ENCODE measurements at regions of chr20 and their contacts with region 1.

Region 1: DNA sequence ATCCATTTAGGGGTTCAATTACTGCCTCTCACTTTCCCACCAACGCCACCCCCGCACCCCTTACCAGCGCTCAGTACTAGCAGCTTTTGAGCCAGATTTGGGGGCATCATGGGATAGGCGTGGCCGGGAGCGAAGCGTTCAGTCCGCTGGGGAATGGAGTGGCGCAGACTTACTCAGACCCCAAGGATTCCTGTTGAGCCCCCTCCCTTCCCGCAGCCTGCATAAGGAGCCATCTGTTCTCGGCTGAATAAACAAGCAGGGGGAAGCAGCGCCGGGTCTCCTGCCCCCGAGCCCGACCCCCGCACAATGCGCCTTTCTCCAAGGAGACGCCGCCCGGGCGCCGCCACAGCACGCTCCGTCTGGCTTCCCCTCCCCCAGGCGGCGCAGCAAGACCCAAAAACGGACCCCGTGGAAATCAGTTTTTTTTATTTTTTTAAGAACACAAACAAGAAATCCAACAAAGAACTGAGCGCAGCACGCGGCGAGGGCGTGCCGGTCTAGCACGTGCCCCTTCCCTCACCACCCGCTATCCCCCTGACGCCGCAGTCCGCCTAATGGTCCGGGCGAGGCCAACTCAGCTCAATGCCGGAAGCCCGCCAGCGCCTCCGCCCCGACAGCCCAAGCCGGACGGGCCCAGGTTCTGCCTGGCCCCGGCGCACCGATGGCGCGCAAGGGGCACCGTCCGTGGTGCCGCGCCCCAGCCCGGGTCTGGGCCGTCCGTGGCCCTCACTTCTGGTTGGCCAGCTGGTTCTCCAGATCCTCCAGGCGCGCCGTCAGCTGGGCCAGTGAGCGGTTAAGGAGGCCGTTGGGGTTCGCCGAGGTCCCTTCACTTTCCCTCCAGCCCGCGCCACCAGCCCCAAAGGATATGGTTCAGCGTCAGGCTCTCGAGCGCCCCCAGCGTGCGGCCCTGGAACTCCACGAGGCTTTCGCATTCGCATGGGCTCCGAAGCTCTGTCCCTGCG is 13.3 kb upstream of the RBPJL start:
- DNase-seq: peak; percentile 33 to 55
- ATAC-seq: peak; percentile 74 to 80
- H3K4me3 ChIP-seq: peak overlapping the region; percentile 46 to 71 (median 58)
- H3K27ac ChIP-seq: no peak overlapping the region
- H3K4me1 ChIP-seq: peaks cover 0 to 5% of the 10 kb centered on the region in 2 donors
- H3K27me3 ChIP-seq: peaks cover 11 to 24% (median 14%) of the 10 kb centered on the region in 3 donors
- CTCF ChIP-seq: peak; percentile 67 to 95 (median 86)
- POLR2A ChIP-seq: no peak

Region 2: DNA sequence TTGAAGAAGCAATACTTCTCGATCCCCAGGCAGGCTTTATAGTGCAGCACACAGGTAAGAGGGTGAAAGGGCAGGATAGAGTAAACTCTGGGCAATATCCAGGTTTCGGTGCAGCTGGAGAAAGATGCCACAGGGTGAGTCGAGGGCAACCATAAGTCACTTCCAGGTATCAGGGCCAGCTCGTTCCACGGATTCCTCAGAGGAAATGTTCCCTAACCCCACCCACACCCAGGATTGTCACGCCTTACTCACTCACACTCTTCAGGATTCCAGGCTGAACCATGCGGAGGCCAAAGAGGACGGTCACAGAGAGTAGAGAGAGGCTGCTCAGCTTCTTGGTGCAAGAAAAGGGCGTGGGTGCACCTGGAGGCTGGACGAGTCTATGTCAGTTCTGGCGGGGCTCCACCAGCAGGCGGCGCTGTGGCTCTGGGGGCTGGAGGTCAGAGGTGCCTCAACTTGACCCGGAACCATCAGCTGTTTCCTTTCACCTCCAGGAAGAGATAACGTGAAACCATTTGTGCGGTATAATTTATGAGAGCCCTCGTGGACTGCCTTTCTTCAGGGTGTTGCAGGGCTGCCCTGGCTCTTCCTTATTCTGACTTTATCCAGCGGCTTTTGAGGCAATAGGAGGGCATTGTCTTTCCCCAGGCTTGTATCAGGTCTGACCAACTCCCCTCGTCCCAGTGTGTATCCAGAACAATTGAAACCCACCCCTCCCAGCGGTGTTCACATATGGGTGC is 154.6 kb before region 1 on chr20:
- in situ Hi-C with region 1: loop called in 2 of 4 experiments (anchors 25 kb)
- intact Hi-C with region 1: loop called (anchors 2 kb)
- DNase-seq: no peak
- ATAC-seq: no peak
- H3K4me3 ChIP-seq: no peak overlapping the region
- H3K27ac ChIP-seq: no peak overlapping the region
- H3K4me1 ChIP-seq: no peaks in the 10 kb centered on the region
- H3K27me3 ChIP-seq: no peaks in the 10 kb centered on the region
- CTCF ChIP-seq: peak in 4 of 5 experiments; percentile 11 to 50 (median 34)
- POLR2A ChIP-seq: no peak

Region 3: DNA sequence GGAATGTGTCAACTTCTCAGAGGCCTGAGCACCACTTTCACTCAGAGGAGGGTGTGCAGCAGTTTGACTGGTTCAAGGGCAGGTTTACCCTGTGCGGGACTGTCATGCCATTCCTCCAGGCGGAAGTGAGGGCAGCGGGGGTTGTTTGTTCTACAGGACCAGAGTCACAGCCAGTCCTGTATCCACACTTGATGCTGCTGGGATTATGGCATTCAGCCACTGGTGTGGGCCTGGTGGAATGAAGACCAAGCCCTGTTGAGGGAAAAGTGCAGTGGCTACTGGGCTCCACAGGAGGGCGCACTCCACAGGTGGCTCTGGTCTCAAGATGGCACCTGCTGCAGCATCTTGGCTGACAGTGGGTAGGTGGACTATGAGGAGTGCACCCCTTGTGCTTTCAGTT is 57.3 kb before region 1 on chr20:
- in situ Hi-C with region 1: no loop called
- intact Hi-C with region 1: loop called (anchors 5 kb)
- DNase-seq: no peak
- ATAC-seq: no peak
- H3K4me3 ChIP-seq: no peak overlapping the region
- H3K27ac ChIP-seq: no peak overlapping the region
- H3K4me1 ChIP-seq: no peaks in the 10 kb centered on the region
- H3K27me3 ChIP-seq: no peaks in the 10 kb centered on the region
- CTCF ChIP-seq: peak in 3 of 5 experiments; percentile 7 to 42 (median 39)
- POLR2A ChIP-seq: no peak

Region 4: DNA sequence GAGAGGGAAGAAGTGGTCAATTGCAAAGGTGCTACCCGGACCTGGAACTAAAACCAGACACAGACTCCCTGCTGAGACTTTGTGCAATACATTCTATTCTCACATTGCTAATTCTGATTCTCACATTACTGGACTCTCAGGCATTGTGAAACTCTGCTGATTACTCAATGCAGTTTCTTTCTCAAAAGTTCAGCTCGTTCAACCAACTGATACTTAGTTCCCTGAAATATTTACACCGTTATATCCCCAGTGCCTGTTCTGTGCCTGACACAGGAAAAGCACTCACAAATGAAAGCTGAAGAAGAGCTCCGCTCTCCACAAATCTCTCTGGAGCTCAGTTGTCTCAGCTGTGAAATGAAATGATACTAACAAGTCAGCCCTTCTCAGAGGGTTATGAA is 38.5 kb before region 1 on chr20:
- in situ Hi-C with region 1: no loop called
- intact Hi-C with region 1: loop called (anchors 5 kb)
- DNase-seq: peak; percentile 28 to 59
- ATAC-seq: peak; percentile 92 to 95
- H3K4me3 ChIP-seq: peak overlapping the region in 3 of 4 donors; percentile 53 to 55 (median 54)
- H3K27ac ChIP-seq: peak overlapping the region; percentile 81 to 83 (median 81)
- H3K4me1 ChIP-seq: peaks cover 5 to 15% of the 10 kb centered on the region in 2 donors
- H3K27me3 ChIP-seq: no peaks in the 10 kb centered on the region
- CTCF ChIP-seq: no peak
- POLR2A ChIP-seq: no peak

Region 5: DNA sequence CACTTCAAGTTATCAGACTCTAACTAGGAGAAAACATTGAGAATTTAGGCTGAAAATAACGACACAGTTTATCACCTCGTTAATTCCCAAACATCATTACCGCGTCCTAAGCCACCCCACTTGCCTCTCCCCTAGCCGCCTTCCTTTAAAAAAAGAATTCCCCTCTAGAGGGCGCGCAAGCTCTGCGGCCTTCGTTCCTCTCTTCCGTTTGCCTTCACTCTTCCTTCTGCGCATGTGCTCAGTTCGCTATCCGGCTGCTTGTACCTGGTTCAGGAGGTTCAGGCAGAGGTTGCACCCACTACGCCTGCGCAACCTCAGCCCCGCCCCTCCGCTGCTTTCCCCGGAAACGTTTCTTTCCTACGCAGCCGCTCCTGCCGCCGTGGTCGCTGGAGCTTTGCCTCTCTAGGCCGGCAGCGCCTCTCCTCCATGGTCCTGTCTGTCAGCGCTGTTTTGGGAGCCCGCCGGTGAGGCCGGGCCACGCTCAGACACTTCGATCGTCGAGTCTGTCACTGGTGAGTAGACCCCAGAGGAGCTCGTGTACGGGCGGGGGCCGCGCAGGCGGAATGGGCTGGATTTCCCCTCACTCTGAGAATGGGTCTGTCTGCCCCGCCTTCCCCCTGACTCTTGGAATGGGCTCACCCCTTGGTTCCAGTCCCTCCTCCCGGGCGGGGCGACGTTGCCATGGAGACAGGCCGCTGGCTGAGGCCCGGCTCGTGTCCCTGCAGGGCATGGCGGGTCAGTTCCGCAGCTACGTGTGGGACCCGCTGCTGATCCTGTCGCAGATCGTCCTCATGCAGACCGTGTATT is 69.7 kb after region 1 on chr20 and contains the start of gene SYS1:
- in situ Hi-C with region 1: no loop called
- intact Hi-C with region 1: no loop called
- DNase-seq: peak; percentile 98
- ATAC-seq: peak; percentile 63 to 76
- H3K4me3 ChIP-seq: peak within 1 kb of the TSS; percentile 66 to 86 (median 75)
- H3K27ac ChIP-seq: peak within 1 kb of the TSS; percentile 94 to 99 (median 96)
- H3K4me1 ChIP-seq: peaks cover 26 to 27% of the 10 kb centered on the region in 2 donors
- H3K27me3 ChIP-seq: no peaks in the 10 kb centered on the region
- CTCF ChIP-seq: peak; percentile 89 to 95 (median 95)
- POLR2A ChIP-seq: peak; percentile 90 to 97
- total RNA-seq, gene SYS1: 34.0 to 59.5 (median 43.7) TPM

Region 6: GRCh38 chr20:45611054-45611453 is 317.7 kb after region 1 on chr20:
- in situ Hi-C with region 1: no loop called
- intact Hi-C with region 1: no loop called
- DNase-seq: no peak
- ATAC-seq: no peak
- H3K4me3 ChIP-seq: no peak overlapping the region
- H3K27ac ChIP-seq: no peak overlapping the region
- H3K4me1 ChIP-seq: no peaks in the 10 kb centered on the region
- H3K27me3 ChIP-seq: no peaks in the 10 kb centered on the region
- CTCF ChIP-seq: no peak
- POLR2A ChIP-seq: no peak

Region 7: GRCh38 chr20:46408281-46408731 is 1115.0 kb after region 1 on chr20:
- in situ Hi-C with region 1: no loop called
- intact Hi-C with region 1: no loop called
- DNase-seq: no peak
- ATAC-seq: no peak
- H3K4me3 ChIP-seq: no peak overlapping the region
- H3K27ac ChIP-seq: no peak overlapping the region
- H3K4me1 ChIP-seq: peaks cover 33 to 37% of the 10 kb centered on the region in 2 donors
- H3K27me3 ChIP-seq: no peaks in the 10 kb centered on the region
- CTCF ChIP-seq: no peak
- POLR2A ChIP-seq: no peak